CD8-positive, alpha-beta T cell (primary cell): ENCODE measurements at regions of chr1 and their contacts with region 1.

Region 1: GRCh38 chr1:46247436-46248121 is at the start of gene RAD54L:
- DNase-seq: peak; percentile 90 to 99 (median 95)
- ATAC-seq: peak; percentile 96
- H3K4me3 ChIP-seq: peak within 1 kb of the TSS; percentile 78 to 80
- H3K4me3 Mint-ChIP-seq: peak within 1 kb of the TSS; percentile 87
- H3K27ac ChIP-seq: peak within 1 kb of the TSS; percentile 43 to 64
- H3K27ac Mint-ChIP-seq: peak within 1 kb of the TSS; percentile 84
- H3K4me1 ChIP-seq: peaks cover 10% of the 10 kb centered on the region
- H3K4me1 Mint-ChIP-seq: peaks cover 16% of the 10 kb centered on the region
- H3K27me3 ChIP-seq: no peaks in the 10 kb centered on the region
- H3K27me3 Mint-ChIP-seq: no peaks in the 10 kb centered on the region
- CTCF ChIP-seq: no peak
- total RNA-seq, gene RAD54L: 0.56 to 1.4 TPM

Region 2: GRCh38 chr1:45686317-45687013 is 561.1 kb before region 1 on chr1 and contains the start of gene GPBP1L1:
- CTCF ChIA-PET with region 1: interaction called, 3 read pairs
- POLR2A ChIA-PET with region 1: no interaction called
- intact Hi-C with region 1: loop called in 1 of 2 experiments (anchors 5 kb)
- DNase-seq: peak; percentile 95 to 98 (median 98)
- ATAC-seq: peak; percentile 72
- H3K4me3 ChIP-seq: peak within 1 kb of the TSS; percentile 99
- H3K4me3 Mint-ChIP-seq: peak within 1 kb of the TSS; percentile 97
- H3K27ac ChIP-seq: peak within 1 kb of the TSS; percentile 84 to 92
- H3K27ac Mint-ChIP-seq: peak within 1 kb of the TSS; percentile 100
- H3K4me1 ChIP-seq: peaks cover 39% of the 10 kb centered on the region
- H3K4me1 Mint-ChIP-seq: peaks cover 59% of the 10 kb centered on the region
- H3K27me3 ChIP-seq: no peaks in the 10 kb centered on the region
- H3K27me3 Mint-ChIP-seq: no peaks in the 10 kb centered on the region
- CTCF ChIP-seq: no peak
- total RNA-seq, gene GPBP1L1: 125 to 128 TPM

Region 3: DNA sequence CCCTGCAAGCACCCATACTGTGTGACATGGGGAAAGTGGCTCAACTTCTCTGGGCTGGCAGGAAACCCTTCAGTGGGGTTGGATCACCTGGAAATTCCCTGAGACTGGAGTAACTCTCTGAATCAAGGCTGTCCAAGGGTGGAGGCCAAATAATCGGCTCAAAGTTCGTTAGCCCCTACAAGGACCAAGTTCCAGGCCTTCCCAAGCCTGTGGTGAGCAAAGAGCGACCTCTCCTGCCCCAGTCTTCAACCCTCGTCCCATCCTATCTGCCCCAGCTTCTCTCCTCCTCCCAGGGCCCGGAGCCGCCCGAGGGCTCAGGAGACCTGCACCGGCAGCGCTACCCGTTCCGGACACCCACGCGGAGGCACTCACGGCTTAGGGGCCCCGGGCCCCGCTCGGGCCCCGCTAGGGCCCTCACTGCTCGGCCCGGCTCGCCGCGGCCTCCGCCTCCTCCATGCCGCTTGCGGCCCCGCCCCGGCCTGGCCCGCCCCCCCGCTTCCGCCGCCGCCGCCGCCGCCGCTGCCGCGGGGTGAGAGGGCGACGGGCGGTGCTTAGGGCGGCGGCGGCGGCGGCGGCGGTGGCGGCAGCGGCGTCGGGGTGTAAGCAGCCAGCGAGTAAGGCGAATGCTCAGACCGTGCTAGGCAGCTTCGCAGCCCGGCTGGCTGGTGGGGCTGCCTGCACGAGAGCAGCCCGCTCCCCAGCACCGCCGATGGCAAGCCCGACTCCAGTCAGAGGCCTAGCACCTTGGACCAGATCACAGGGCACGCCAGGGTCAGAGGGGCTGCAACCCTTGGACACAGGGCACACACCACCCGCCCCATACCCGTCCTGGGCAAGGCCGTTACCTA is 49.4 kb before region 1 on chr1 and contains the start of gene POMGNT1:
- CTCF ChIA-PET with region 1: interaction called, 5 read pairs
- POLR2A ChIA-PET with region 1: no interaction called
- intact Hi-C with region 1: loop called (anchors 1 kb)
- DNase-seq: peak; percentile 50 to 86 (median 72)
- ATAC-seq: peak; percentile 93
- H3K4me3 ChIP-seq: peak within 1 kb of the TSS; percentile 75 to 93
- H3K4me3 Mint-ChIP-seq: peak within 1 kb of the TSS; percentile 83
- H3K27ac ChIP-seq: peak within 1 kb of the TSS; percentile 58 to 59
- H3K27ac Mint-ChIP-seq: peak within 1 kb of the TSS; percentile 88
- H3K4me1 ChIP-seq: peaks cover 20% of the 10 kb centered on the region
- H3K4me1 Mint-ChIP-seq: peaks cover 32% of the 10 kb centered on the region
- H3K27me3 ChIP-seq: peaks cover 0 to 3% of the 10 kb centered on the region in 2 experiments
- H3K27me3 Mint-ChIP-seq: no peaks in the 10 kb centered on the region
- CTCF ChIP-seq: no peak
- total RNA-seq, gene POMGNT1: 20.3 to 23.4 TPM

Region 4: GRCh38 chr1:46340404-46341221 is 93.0 kb after region 1 on chr1 and contains the start of gene NSUN4:
- CTCF ChIA-PET with region 1: interaction called, 42 read pairs
- POLR2A ChIA-PET with region 1: no interaction called
- intact Hi-C with region 1: loop called (anchors 1 to 2 kb)
- DNase-seq: peak; percentile 66 to 96 (median 83)
- ATAC-seq: peak; percentile 85
- H3K4me3 ChIP-seq: peak within 1 kb of the TSS; percentile 90 to 98
- H3K4me3 Mint-ChIP-seq: peak within 1 kb of the TSS; percentile 99
- H3K27ac ChIP-seq: peak within 1 kb of the TSS; percentile 91 to 100
- H3K27ac Mint-ChIP-seq: peak within 1 kb of the TSS; percentile 99
- H3K4me1 ChIP-seq: peaks cover 14% of the 10 kb centered on the region
- H3K4me1 Mint-ChIP-seq: peaks cover 48% of the 10 kb centered on the region
- H3K27me3 ChIP-seq: no peaks in the 10 kb centered on the region
- H3K27me3 Mint-ChIP-seq: no peaks in the 10 kb centered on the region
- CTCF ChIP-seq: peak; percentile 63
- total RNA-seq, gene NSUN4: 31.0 to 35.0 TPM

Region 5: GRCh38 chr1:46487818-46488218 is 240.2 kb after region 1 on chr1:
- CTCF ChIA-PET with region 1: no interaction called
- POLR2A ChIA-PET with region 1: no interaction called
- intact Hi-C with region 1: no loop called
- DNase-seq: no peak
- ATAC-seq: no peak
- H3K4me3 ChIP-seq: no peak overlapping the region
- H3K4me3 Mint-ChIP-seq: no peak overlapping the region
- H3K27ac ChIP-seq: no peak overlapping the region
- H3K27ac Mint-ChIP-seq: no peak overlapping the region
- H3K4me1 ChIP-seq: peaks cover 9% of the 10 kb centered on the region
- H3K4me1 Mint-ChIP-seq: peaks cover 19% of the 10 kb centered on the region
- H3K27me3 ChIP-seq: peaks cover 14 to 18% of the 10 kb centered on the region in 2 experiments
- H3K27me3 Mint-ChIP-seq: peaks cover 74% of the 10 kb centered on the region
- CTCF ChIP-seq: no peak

Region 6: DNA sequence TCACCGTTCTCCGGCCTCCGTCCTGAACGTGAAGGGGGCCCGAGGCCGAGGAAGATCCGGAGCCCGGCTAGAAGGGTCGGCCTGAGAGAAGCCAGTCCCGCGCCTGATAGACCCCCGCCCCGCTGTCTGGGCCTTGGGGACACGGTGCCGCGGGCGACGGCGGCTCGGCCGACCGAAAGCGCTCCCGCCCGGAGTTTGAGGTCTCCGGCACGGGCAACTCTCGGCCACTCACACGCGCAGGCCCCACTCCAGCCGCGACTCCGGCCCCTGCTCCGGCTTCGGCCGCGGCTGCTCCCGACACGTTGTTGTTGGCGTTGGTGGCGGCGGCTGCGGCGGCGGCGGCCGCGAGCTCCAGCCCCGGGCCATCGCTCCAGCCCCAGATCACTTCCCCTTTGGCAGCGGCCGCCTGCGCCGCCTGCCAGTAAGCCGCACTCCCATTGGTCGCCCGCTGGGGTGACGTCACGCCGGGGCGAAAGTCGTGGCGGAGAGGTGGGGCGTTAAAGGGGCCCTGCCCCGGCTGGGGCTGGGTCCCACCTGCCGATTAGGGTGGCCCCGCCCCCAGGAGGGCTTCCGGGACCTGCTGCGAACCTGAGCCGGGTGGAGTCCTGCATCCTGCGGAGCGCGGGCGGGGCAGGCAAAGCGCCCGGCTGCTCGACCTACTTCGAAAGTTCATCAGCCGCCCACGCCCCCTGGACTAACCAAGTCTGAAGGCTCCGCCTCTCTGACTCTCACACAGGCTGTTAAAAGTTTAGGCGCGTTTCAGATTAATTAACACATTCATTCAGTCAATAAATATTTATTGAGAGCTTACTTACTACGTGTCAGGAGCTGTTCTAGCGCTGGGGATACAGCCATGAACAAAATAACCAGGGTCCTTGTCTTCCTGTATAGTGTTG is 471.4 kb after region 1 on chr1 and contains the start of gene EFCAB14:
- CTCF ChIA-PET with region 1: no interaction called
- POLR2A ChIA-PET with region 1: no interaction called
- intact Hi-C with region 1: loop called in 1 of 2 experiments (anchors 2 kb)
- DNase-seq: peak; percentile 98 to 100 (median 99)
- ATAC-seq: peak; percentile 99
- H3K4me3 ChIP-seq: peak within 1 kb of the TSS; percentile 86 to 90
- H3K4me3 Mint-ChIP-seq: peak within 1 kb of the TSS; percentile 89
- H3K27ac ChIP-seq: peak within 1 kb of the TSS; percentile 77 to 81
- H3K27ac Mint-ChIP-seq: peak within 1 kb of the TSS; percentile 91
- H3K4me1 ChIP-seq: peaks cover 28% of the 10 kb centered on the region
- H3K4me1 Mint-ChIP-seq: peaks cover 39% of the 10 kb centered on the region
- H3K27me3 ChIP-seq: no peaks in the 10 kb centered on the region
- H3K27me3 Mint-ChIP-seq: no peaks in the 10 kb centered on the region
- CTCF ChIP-seq: no peak
- total RNA-seq, gene EFCAB14: 33.1 to 36.9 TPM